ENCODE measurements at regions of chr2 and their contacts with region 1.

Region 1: DNA sequence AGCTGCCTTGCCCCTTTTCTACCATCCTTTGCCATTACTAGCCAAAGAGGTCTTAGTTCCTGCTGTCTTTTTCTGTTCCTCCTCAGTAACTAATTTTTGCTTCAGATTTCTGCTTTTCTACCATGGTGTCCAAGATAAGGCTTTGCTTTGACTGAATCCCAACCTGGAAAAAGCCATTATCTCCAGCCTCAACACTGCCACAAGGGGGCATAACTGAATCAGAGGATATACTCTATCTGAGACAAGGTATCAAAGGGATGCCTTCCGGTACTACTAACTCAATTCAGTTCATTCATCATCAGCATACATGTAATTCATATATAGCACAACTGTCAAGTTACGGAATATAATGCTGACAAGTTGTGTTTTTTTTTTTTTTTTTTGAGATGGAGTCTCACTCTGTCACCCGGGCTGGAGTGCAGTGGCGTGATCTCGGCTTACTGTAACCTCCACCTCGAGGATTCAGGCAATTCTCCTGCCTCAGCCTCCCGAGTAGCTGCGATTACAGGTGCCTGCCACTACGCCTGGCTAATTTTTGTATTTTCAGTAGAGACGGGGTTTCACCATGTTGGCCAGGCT is 11.4 kb downstream of the OSGEPL1 start:
- DNase-seq: no peak
- H3K4me3 ChIP-seq: no peak overlapping the region
- H3K27ac ChIP-seq: no peak overlapping the region
- H3K4me1 ChIP-seq: no peaks in the 10 kb centered on the region
- H3K27me3 ChIP-seq: no peaks in the 10 kb centered on the region
- CTCF ChIP-seq: peak; percentile 35 to 63 (median 47)
- EP300 ChIP-seq: no peak
- POLR2A ChIP-seq: no peak

Region 2: DNA sequence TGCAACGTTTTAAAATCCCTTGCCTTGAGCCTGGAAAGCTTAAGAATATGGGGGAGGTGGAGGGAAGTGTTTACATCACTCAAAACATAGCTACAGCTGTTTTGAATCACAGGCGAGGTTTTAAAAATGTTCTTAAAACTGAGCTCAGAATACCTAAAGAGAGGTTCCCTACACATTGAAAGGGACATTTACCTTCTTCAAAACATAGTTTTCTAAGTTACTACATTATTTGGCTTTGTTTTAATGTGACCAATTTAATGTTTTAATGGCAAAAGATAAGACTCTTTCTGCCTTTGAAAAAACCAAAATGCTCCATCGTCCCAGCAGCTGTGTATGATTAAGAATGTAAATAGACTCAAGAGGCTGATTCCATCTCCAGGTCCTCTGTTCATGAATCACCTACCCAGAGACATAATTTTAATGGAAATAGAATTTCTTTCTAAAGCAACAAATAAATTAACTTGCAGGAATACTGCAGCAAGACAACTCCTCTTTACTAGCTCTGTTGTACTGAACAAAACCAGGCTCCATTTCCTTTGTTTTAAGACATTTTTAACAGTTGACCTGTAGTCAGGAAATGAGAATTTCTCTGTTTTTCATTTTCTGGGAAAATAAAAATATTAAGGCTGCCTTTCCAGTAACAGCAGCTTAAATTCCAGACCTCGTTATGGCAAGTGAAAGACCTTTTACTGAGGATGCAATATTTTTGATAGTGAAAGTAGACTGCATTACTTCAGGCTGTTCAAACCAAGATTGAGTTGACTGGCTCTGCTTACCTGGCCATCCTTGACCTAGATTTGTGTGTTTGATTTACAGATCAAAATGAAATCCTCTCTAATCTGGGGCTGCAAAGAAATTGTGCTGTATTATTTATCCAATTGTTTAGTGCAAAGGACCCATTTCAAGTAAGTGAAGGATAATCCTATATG is 343.6 kb before region 1 on chr2:
- intact Hi-C with region 1: no loop called
- DNase-seq: no peak
- H3K4me3 ChIP-seq: peak overlapping the region in 1 of 4 donors; percentile 16
- H3K27ac ChIP-seq: peak overlapping the region; percentile 34 to 66 (median 57)
- H3K4me1 ChIP-seq: peaks cover 0 to 54% (median 36%) of the 10 kb centered on the region in 4 donors
- H3K27me3 ChIP-seq: no peaks in the 10 kb centered on the region
- CTCF ChIP-seq: no peak
- EP300 ChIP-seq: no peak
- POLR2A ChIP-seq: no peak

Region 3: GRCh38 chr2:190069936-190070696 is 318.9 kb after region 1 on chr2:
- intact Hi-C with region 1: loop called (anchors 10 kb)
- DNase-seq: no peak
- H3K4me3 ChIP-seq: no peak overlapping the region
- H3K27ac ChIP-seq: no peak overlapping the region
- H3K4me1 ChIP-seq: peaks cover 0 to 4% (median 0%) of the 10 kb centered on the region in 4 donors
- H3K27me3 ChIP-seq: no peaks in the 10 kb centered on the region
- CTCF ChIP-seq: peak in 2 of 3 experiments; percentile 52 to 58
- EP300 ChIP-seq: no peak
- POLR2A ChIP-seq: no peak

Measured in esophagus muscularis mucosa (tissue), 4 donors.